A549 (cell line): ENCODE measurements at regions of chr1 and their contacts with region 1.

Region 1: DNA sequence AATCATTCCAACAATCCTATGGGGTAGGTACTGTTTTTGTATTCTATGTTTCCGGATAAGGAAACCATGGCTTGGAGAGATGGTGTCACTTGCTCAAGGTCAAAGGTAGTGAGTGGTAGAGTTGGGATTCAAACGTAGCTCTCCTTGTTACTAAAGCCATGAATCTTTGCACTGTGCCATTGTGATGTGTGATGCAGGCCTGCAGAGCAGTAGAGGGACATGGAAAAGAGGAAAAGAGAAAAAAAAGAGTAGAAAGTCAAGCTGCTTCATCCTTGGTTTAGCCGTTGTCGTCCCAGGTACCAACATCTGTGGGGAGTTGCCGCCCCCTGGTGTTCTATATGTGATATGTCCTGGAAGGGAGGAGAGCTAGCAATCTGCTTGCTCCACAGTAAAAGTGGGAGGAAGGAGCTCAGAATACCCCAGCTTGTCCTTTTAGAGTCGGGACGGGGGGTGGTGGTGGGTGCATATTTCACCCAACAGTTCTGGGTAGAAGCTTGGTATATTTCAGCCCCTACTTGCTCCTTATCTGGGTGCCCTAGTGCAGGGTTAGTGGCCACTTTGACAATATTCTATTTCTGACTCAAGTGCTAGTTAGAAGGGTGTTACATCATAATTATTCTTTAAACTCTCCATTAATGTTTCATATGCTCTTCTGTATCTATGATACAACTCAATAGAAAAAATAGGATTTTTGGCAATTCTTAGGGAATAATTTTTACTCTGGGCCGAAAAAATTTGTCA is 98.4 kb downstream of the EBNA1BP2 start:
- DNase-seq: peak; percentile 56 to 73
- ATAC-seq: peak; percentile 93 to 97
- H3K4me3 ChIP-seq: no peak overlapping the region
- H3K27ac ChIP-seq: peak overlapping the region; percentile 52 to 66
- H3K4me1 ChIP-seq: peaks cover 10% of the 10 kb centered on the region; the same call in 2 of the 3 replicates
- CTCF ChIP-seq: peak; percentile 73
- EP300 ChIP-seq: no peak
- POLR2A ChIP-seq: no peak
- RAD21 ChIP-seq: peak; percentile 97 to 98

Region 2: DNA sequence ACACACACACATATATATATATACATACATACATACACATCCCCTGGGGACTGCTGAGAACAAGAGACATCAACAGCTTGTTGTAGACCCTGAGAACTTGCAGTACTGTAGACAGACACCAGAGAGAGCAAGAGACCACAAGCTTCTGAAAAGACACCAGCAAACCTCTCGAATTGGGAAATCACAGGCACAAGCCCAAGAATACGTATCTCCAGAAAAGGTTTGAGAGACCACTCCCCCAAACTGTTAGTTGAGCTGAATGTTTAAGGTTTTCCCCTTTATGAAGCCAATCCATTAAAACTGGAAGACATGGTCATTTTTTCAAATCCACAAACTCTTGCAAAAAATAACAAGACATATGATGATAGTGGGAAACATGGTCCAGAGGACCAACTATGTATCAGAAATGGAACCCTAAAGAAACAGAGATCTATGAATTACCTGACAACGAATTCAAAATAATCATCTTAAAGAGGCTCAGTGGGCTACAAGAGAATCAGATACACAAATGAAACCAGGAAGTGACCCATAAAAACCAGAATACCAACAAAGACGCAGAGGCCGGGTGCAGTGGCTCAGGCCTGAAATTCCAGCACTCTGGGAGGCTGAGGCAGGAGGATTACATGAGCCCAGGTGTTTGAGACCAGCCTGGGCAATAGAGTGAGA is 160.1 kb before region 1 on chr1:
- CTCF ChIA-PET with region 1: interaction called, 280 read pairs
- POLR2A ChIA-PET with region 1: interaction called, 12 read pairs
- DNase-seq: peak; percentile 48 to 80
- ATAC-seq: peak; percentile 56 to 84; a peak in 5 of 6 replicates
- H3K4me3 ChIP-seq: no peak overlapping the region
- H3K27ac ChIP-seq: no peak overlapping the region
- H3K4me1 ChIP-seq: no peaks in the 10 kb centered on the region
- CTCF ChIP-seq: peak; percentile 62
- EP300 ChIP-seq: no peak
- POLR2A ChIP-seq: no peak
- RAD21 ChIP-seq: peak; percentile 85 to 91

Region 3: GRCh38 chr1:42936309-42937078 is 137.2 kb before region 1 on chr1:
- CTCF ChIA-PET with region 1: interaction called, 37 read pairs
- POLR2A ChIA-PET with region 1: interaction called, 3 read pairs
- DNase-seq: peak in 1 of 2 experiments; percentile 92
- ATAC-seq: peak; percentile 64 to 69
- H3K4me3 ChIP-seq: 0 out of 3 replicates have a peak overlapping the region, but pooled peaks have one; percentile 13
- H3K27ac ChIP-seq: peak overlapping the region; percentile 91 to 99
- H3K4me1 ChIP-seq: peaks cover 100% of the 10 kb centered on the region
- CTCF ChIP-seq: no peak
- EP300 ChIP-seq: peak; percentile 86 to 87; a peak in 4 of 5 replicates
- POLR2A ChIP-seq: no peak
- RAD21 ChIP-seq: peak in 1 of 2 experiments; percentile 51; a peak in 2 of 5 replicates

Region 4: DNA sequence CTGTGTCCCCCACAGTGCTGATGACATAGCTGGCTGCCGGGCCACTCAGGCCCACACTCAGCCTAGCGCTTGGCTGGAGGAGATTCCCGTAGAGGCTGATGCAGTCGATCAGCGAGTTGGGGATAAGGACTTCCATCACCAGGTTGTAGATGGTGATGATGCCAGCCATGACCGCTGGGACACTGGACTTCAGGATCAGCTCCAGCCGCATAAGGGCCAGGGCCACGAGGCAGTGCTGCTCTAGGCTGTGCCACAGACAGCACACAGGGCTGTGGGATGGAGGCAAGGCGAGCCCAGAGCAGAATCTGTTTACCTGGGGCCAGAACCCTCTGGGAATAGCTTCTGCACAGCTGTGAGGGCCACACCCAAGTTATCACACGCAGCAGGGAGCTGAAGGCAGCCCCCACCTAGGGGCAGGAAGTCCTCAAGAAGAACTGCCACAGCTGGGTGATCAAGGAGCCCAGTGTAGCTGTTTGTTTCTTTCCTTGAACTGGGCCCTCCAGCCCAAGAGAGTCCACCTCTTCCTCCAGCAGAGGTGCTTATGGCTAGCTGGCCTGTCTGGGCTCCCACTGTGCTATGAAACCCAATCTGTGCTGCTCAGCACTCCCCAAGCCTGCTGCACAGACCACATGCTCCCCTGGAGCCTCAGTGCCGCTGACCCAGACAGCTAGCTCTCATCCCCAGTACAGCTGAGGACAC is 121.2 kb before region 1 on chr1:
- CTCF ChIA-PET with region 1: interaction called, 38 read pairs
- POLR2A ChIA-PET with region 1: no interaction called
- DNase-seq: peak in 1 of 2 experiments; percentile 2
- ATAC-seq: peak; percentile 15 to 16; a peak in 4 of 6 replicates
- H3K4me3 ChIP-seq: no peak overlapping the region
- H3K27ac ChIP-seq: peak overlapping the region; percentile 48 to 75; a peak in 5 of 6 replicates
- H3K4me1 ChIP-seq: peaks cover 85% of the 10 kb centered on the region
- CTCF ChIP-seq: no peak
- EP300 ChIP-seq: no peak
- POLR2A ChIP-seq: no peak
- RAD21 ChIP-seq: no peak

Region 5: DNA sequence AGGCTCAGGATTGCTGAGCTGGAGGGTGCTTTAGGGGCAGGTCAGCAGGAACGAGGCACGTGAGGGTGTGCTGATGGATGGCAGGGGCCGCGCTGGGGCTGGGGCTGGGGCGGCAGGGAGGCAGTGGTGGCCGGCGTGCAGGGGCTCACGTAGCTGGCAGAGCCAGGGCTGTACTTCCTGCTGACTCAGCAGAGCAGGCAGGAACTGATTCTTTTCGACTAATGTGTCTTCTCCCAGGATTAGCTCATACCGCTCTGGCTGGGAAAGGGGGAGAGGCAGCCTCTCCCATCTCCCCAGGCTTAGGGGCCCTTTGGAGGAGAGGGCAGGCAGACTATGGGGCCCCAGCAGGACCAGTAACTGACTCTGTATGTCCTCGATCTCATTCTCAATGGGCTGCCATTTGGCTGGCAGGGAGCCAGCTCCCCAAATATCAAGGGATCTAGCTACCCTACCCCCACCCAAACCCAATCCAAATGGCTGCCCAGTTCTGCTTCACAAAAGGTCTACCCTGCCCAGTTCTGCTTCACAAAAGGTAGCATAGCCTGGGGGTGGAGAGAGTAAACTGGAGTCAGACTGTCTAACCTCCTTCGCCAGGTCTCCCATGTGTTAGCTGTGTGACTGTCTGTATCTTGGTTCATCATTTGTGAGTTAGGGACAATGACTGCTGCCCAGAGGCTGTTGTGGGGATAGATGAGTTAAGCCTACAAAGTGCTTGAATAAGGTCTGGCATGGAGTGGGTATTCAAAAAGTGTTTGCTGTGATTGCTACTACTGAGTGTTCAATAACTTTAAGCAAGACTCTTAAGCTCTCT is 14.9 kb before region 1 on chr1:
- CTCF ChIA-PET with region 1: interaction called, 19 read pairs
- POLR2A ChIA-PET with region 1: no interaction called
- DNase-seq: no peak
- ATAC-seq: no peak
- H3K4me3 ChIP-seq: no peak overlapping the region
- H3K27ac ChIP-seq: no peak overlapping the region
- H3K4me1 ChIP-seq: no peaks in the 10 kb centered on the region
- CTCF ChIP-seq: no peak
- EP300 ChIP-seq: no peak
- POLR2A ChIP-seq: no peak
- RAD21 ChIP-seq: no peak

Region 6: GRCh38 chr1:43227143-43227764 is 153.6 kb after region 1 on chr1:
- CTCF ChIA-PET with region 1: no interaction called
- POLR2A ChIA-PET with region 1: no interaction called
- DNase-seq: peak; percentile 55 to 61
- ATAC-seq: peak; percentile 88 to 98
- H3K4me3 ChIP-seq: no peak overlapping the region
- H3K27ac ChIP-seq: peak overlapping the region in 1 of 2 experiments; percentile 64; a peak in 2 of 6 replicates
- H3K4me1 ChIP-seq: peaks cover 5% of the 10 kb centered on the region; the same call in 1 of the 3 replicates
- CTCF ChIP-seq: peak; percentile 85
- EP300 ChIP-seq: no peak
- POLR2A ChIP-seq: no peak
- RAD21 ChIP-seq: peak; percentile 91 to 93